ENCODE measurements at regions of chr22 and their contacts with region 1.

Region 1: DNA sequence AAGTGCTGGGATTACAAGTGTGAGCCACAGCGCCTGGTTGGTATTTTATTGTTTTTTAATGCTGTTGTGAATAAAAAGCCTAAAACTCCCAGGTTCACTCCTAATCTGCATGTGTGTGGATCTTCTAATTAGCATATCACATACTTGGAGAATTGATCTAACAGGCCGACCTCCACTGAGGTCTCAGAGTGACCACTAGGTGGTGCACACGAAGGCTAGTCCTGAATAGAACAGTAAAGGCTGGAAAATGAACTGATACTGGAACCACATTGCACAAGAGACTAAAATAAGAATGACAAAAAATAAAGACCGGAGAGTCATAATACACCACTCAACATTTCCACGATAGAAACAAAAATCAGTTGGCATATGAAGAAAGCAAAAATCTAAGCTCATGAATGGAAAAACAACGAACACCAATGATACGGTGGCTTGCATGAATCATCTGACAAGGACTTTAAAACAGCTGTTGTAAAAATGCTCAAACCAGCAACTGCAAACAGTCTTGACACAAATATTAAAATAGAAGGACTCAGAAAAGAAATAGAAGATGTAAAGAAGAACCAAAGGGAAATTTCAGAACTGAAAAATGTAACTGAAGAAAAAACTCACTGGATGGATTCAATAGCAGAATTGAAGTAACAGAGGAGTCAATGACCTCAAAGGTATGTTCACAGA is 19.2 kb downstream of the PIM3 start:
- DNase-seq: peak; percentile 69
- ATAC-seq: peak; percentile 13
- H3K4me3 Mint-ChIP-seq: peak overlapping the region; percentile 15
- H3K27ac Mint-ChIP-seq: peak overlapping the region; percentile 83
- H3K4me1 Mint-ChIP-seq: peaks cover 46% of the 10 kb centered on the region
- H3K27me3 Mint-ChIP-seq: peaks cover 7% of the 10 kb centered on the region

Region 2: GRCh38 chr22:49992921-49993648 is 13.4 kb after region 1 on chr22:
- CTCF ChIA-PET with region 1: interaction called, 4 read pairs
- POLR2A ChIA-PET with region 1: no interaction called
- intact Hi-C with region 1: loop called in 1 of 2 experiments (anchors 2 kb)
- DNase-seq: peak; percentile 87
- ATAC-seq: peak; percentile 98
- H3K4me3 Mint-ChIP-seq: no peak overlapping the region
- H3K27ac Mint-ChIP-seq: peak overlapping the region; percentile 53
- H3K4me1 Mint-ChIP-seq: peaks cover 5% of the 10 kb centered on the region
- H3K27me3 Mint-ChIP-seq: no peaks in the 10 kb centered on the region

Measured in activated CD4-positive, alpha-beta T cell treated with anti-CD3 and anti-CD28 coated beads for 36 hours (primary cell).